Right ventricle myocardium superior (tissue), 1 donor: ENCODE measurements at regions of chr2 and their contacts with region 1.

Region 1: GRCh38 chr2:219530048-219530963 is 13.3 kb downstream of the CHPF start:
- DNase-seq: peak; percentile 89
- ATAC-seq: peak; percentile 91

Region 2: GRCh38 chr2:219405451-219405850 is 124.9 kb before region 1 on chr2:
- intact Hi-C with region 1: loop called (anchors 2 kb)
- DNase-seq: peak; percentile 73
- ATAC-seq: peak; percentile 77

Region 3: GRCh38 chr2:219464286-219465032 is 65.8 kb before region 1 on chr2:
- intact Hi-C with region 1: no loop called
- DNase-seq: no peak
- ATAC-seq: no peak

Region 4: GRCh38 chr2:219475697-219476651 is 54.3 kb before region 1 on chr2:
- intact Hi-C with region 1: loop called (anchors 5 kb)
- DNase-seq: peak; percentile 80
- ATAC-seq: peak; percentile 72

Region 5: GRCh38 chr2:219661197-219661954 is 131.1 kb after region 1 on chr2:
- intact Hi-C with region 1: no loop called
- DNase-seq: no peak
- ATAC-seq: no peak